T-cell (primary cell): ENCODE measurements at regions of chrX and their contacts with region 1.

Region 1: DNA sequence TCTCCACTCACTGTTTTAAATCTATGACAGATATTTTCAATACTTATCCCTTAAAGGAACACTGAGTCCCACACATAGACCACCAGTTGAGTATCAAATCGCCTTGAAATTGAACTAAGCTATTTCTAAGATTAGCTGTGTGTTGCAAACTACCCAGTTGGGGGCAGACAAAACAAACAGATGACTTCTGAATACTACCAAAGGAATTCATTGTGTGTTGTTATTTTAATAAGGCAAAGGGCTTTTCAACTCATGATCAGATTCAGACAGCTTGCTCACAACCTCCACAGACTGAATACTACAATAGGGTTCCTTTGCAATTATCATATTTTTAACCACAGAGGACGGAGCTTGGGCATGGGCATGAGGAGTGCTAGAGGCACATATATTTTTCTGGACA is 283.0 kb upstream of the GPC4 start:
- DNase-seq: peak in 1 of 35 experiments; percentile 20
- ATAC-seq: no peak
- H3K4me3 ChIP-seq: no peak overlapping the region
- H3K4me3 Mint-ChIP-seq: no peak overlapping the region
- H3K27ac ChIP-seq: no peak overlapping the region
- H3K27ac Mint-ChIP-seq: no peak overlapping the region
- H3K4me1 ChIP-seq: no peaks in the 10 kb centered on the region
- H3K4me1 Mint-ChIP-seq: no peaks in the 10 kb centered on the region
- H3K27me3 ChIP-seq: no peaks in the 10 kb centered on the region
- H3K27me3 Mint-ChIP-seq: peaks cover 0 to 29% of the 10 kb centered on the region in 2 donors

Region 2: GRCh38 chrX:133776072-133776471 is 77.8 kb after region 1 on chrX:
- CTCF ChIA-PET with region 1: interaction called, 6 to 11 read pairs
- POLR2A ChIA-PET with region 1: no interaction called
- DNase-seq: peak in 33 of 35 experiments; percentile 4 to 57 (median 34)
- ATAC-seq: peak in 1 of 4 experiments; percentile 52
- H3K4me3 ChIP-seq: no peak overlapping the region
- H3K4me3 Mint-ChIP-seq: no peak overlapping the region
- H3K27ac ChIP-seq: no peak overlapping the region
- H3K27ac Mint-ChIP-seq: no peak overlapping the region
- H3K4me1 ChIP-seq: no peaks in the 10 kb centered on the region
- H3K4me1 Mint-ChIP-seq: no peaks in the 10 kb centered on the region
- H3K27me3 ChIP-seq: no peaks in the 10 kb centered on the region
- H3K27me3 Mint-ChIP-seq: peaks cover 0 to 13% of the 10 kb centered on the region in 2 donors